Heart right ventricle (tissue), 16 donors: ENCODE measurements at regions of chr14 and their contacts with region 1.

Region 1: DNA sequence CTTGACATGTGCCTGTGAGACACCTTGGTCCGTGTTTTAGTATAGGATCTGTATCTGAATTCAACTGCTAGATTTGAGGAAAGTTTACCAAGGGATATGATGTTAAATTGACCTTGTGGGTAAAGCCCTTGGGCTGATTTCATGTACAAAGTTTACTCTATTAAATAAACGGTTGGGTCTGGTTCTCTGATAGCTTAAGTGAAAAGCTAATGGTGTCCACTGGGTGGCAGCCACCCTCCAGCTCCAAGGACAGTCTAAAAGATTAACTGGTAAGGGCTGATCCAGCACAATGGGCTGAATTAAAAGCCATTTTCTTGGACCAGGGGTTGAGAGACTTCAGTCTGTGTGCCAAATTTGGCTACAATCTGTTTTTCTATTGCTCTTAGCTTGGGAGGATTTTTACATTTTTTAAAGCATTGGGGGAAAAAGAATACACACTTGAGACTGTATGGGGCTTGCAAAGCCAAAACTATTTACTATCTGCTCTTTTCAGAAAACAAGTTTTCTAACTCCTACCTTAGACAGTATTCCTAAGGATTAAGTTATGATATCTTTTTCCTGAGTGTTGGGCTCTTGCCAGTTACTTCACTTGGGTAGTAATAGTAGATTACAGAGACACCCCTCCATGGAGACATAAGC is 116.5 kb downstream of the GPHN start:
- DNase-seq: peak; percentile 36 to 50
- ATAC-seq: peak; percentile 77 to 96 (median 88)
- H3K4me3 ChIP-seq: no peak overlapping the region
- H3K27ac ChIP-seq: peak overlapping the region in 1 of 10 donors; percentile 30
- H3K4me1 ChIP-seq: peaks cover 0 to 17% (median 11%) of the 10 kb centered on the region in 9 donors
- H3K27me3 ChIP-seq: no peaks in the 10 kb centered on the region
- CTCF ChIP-seq: peak; percentile 40 to 82 (median 71)

Region 2: DNA sequence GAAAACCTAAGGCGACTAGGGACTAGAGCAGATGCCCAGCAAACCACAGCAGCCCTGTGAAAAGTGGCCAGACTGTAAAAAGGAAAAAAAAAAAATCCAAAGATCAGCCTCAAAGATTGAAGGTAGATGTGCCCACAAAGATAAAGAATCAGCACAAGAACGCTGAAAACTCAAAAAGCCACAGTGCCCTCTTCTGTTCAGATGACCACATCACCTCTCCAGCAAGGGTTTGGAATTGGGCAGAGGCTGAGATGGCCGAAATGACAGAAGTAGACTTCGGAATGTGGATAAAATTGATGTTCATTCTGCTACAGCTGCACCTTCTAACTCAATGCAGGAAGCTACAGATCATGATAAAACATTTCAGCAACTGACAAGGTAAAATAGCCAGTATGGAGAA is 38.0 kb after region 1 on chr14:
- intact Hi-C with region 1: loop called in 2 of 10 experiments (anchors 5 kb)
- DNase-seq: no peak
- ATAC-seq: no peak
- H3K4me3 ChIP-seq: no peak overlapping the region
- H3K27ac ChIP-seq: no peak overlapping the region
- H3K4me1 ChIP-seq: peaks cover 0 to 3% (median 0%) of the 10 kb centered on the region in 9 donors
- H3K27me3 ChIP-seq: no peaks in the 10 kb centered on the region
- CTCF ChIP-seq: peak in 8 of 9 donors; percentile 7 to 57 (median 45)

Region 3: DNA sequence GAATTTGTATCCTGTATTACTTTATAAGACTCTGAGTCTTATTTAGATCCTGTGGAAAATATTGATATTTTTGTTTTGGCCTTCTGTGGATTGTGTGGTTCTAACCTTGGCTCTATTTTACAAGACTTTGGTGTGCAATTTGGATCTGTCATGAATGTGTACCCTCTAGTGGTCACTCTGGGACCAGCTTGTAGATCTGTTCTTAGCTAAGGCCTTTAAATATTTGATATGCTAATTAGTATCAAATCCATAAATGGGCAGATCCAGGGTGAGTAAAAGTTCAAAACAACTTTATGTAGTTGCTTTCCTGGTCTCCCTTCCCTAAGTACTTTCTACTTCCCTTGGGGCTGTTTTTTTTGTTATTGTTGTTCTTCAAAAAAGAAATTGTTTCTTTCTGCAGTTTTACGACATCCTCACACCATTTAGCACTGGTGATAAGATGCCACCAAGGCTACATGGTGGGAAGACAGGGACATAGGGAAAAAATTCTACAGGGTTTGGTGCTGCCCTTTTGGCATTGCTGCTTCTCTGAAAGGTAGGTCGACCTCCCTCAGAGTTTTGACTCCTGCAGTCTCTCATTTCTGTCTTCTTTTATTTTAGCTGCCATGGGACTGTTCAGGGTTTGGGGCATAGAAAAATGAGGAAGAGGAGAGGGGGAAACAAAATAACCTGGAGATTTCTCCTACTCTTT is 122.0 kb after region 1 on chr14:
- intact Hi-C with region 1: loop called in 2 of 10 experiments (anchors 5 to 10 kb)
- DNase-seq: peak in 1 of 2 donors; percentile 6
- ATAC-seq: peak in 5 of 8 donors; percentile 34 to 63 (median 61)
- H3K4me3 ChIP-seq: no peak overlapping the region
- H3K27ac ChIP-seq: no peak overlapping the region
- H3K4me1 ChIP-seq: peaks cover 0 to 22% (median 7%) of the 10 kb centered on the region in 9 donors
- H3K27me3 ChIP-seq: no peaks in the 10 kb centered on the region
- CTCF ChIP-seq: peak; percentile 33 to 71 (median 56)

Region 4: DNA sequence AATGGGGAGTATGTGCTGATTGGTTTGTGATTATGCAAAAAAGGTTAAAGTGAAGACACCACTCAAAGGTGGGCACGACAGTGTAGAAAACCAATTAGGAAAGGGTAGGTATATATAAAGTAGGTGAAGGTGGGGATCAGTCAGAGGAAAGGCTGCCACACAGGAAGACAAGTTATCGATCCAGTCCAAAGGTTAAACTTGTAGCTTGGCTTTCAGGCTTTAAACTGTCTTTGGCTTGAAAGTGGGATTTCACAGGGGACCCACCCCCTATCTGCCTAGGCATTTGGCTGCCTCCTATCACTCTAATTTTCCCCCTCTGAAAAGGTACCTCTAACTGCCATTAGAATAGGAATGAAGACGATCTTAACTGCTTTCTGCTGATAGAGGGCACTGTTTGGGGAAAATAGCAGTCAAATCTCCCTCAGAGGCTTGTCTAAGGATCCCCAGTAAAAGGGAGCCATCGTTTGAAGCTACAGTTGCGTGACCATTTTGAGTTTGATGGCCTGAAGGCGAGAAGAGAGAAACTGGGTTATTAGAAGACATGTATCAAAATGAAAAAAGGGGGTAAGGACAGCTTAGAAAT is 133.7 kb after region 1 on chr14:
- intact Hi-C with region 1: loop called in 1 of 10 experiments (anchors 10 kb)
- DNase-seq: no peak
- ATAC-seq: no peak
- H3K4me3 ChIP-seq: no peak overlapping the region
- H3K27ac ChIP-seq: no peak overlapping the region
- H3K4me1 ChIP-seq: no peaks in the 10 kb centered on the region
- H3K27me3 ChIP-seq: no peaks in the 10 kb centered on the region
- CTCF ChIP-seq: no peak

Region 5: DNA sequence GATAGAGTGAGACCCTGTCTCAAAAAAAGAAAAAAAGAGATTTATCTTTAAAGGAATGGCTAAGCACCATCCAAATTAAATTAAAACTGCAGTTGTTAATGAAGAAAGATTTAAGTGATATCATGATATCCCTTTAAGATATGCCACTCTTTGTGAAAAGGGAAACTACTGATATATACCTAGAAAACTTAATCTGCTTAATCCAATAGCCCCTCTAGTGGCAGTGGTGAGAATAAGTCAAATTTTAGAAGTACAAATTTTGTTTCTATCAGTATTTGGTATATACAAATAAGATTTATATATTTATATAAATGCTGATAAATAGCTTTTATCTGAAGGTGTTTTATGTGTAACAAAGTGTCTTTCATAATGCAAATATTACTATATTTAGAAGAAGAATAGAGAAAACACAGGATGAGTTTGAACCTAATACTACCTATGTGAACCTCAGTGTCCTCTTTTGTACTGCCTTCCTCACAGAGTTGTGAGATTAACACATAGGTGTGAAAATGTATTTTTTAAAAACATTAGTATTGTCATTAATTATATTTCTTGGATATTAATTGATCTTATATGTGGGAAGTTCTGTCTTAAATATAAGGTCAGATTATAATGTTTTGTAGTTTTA is 513.4 kb after region 1 on chr14:
- intact Hi-C with region 1: loop called in 1 of 10 experiments (anchors 10 kb)
- DNase-seq: no peak
- ATAC-seq: no peak
- H3K4me3 ChIP-seq: no peak overlapping the region
- H3K27ac ChIP-seq: no peak overlapping the region
- H3K4me1 ChIP-seq: no peaks in the 10 kb centered on the region
- H3K27me3 ChIP-seq: no peaks in the 10 kb centered on the region
- CTCF ChIP-seq: peak in 7 of 9 donors; percentile 26 to 53 (median 37)

Region 6: DNA sequence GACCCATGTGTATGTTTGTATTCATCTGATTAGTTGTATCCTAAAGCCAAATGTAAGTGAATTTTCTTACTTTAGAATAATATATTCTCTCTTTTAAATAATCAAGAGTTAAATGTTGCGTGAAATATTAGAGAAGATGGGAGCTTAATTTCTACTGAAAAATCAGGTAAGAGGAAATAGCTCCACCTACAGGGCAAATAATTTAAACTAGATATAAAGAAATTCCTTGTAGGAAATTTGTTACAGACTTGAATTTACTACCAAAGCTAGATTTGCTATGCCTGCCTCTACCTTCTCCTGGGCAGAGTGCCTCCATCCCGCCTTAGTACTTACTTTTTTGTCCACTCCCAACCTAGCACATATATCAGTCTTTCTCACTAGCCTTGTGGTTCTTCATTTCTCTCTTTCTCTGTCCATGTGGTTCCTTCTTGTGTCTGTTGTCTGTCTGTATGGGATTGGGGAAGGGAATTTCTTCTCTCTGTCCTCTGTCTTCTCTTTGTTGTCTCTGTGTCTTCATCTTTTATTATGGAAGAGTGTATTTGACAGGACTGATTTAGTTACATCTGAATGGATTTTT is 661.5 kb after region 1 on chr14:
- intact Hi-C with region 1: loop called in 2 of 10 experiments (anchors 5 to 10 kb)
- DNase-seq: no peak
- ATAC-seq: no peak
- H3K4me3 ChIP-seq: no peak overlapping the region
- H3K27ac ChIP-seq: no peak overlapping the region
- H3K4me1 ChIP-seq: no peaks in the 10 kb centered on the region
- H3K27me3 ChIP-seq: no peaks in the 10 kb centered on the region
- CTCF ChIP-seq: peak; percentile 43 to 78 (median 62)